Panc1 (cell line): ENCODE measurements at regions of chr2 and their contacts with region 1.

Region 1: DNA sequence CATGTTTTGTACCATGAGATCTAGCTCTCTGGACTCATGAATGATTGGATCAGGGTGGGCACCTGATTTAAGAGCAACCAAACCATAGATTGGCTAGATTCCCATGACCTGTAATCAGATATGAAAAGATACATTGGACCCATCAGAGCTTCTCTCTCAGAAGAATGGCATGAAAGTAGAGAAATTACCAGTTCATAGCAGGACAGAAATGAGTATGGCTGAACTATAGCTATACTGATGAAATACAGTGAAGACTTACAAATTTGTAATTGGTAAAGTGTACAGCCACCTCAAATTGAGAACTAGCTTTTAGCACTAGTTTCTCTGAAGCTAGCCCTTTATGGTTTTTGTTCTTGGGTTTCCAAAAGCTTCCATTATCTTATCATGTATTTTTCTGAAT is 19.0 kb upstream of the EML4 start:
- DNase-seq: no peak
- ATAC-seq: no peak
- H3K4me3 ChIP-seq: no peak overlapping the region
- H3K27ac ChIP-seq: no peak overlapping the region; the same call in 1 of the 2 replicates
- H3K4me1 ChIP-seq: peaks cover 13% of the 10 kb centered on the region
- H3K27me3 ChIP-seq: no peaks in the 10 kb centered on the region
- CTCF ChIP-seq: no peak

Region 2: DNA sequence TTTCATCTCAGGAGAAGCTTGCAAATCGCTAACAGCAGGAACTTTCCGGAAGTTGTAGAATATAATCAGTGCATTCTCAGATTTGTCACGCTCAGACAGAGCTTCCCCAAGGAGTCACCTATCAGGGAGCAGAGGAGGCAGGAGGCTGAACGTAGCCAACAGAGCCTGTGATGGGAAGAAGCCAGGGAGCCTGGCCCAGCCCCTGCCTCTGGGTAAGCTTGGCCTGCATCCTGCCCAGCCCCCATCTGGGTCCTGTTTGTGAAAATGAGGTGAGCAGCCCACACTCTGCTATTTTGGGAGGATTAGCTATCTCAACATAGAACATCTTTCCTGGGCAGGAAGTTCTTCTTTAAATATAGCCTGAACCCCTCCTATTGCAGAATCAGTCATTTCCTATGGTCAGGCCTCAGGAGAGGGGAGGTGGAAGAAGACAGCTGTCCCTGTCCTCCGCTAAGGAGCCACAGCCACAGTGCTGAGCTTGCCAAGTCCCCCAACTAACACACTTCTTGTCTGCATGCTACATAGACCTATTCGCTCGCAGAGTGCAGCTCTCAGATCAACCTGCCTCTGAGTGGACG is 121.5 kb before region 1 on chr2:
- CTCF ChIA-PET with region 1: no interaction called
- POLR2A ChIA-PET with region 1: no interaction called
- in situ Hi-C with region 1: no loop called
- intact Hi-C with region 1: no loop called
- DNase-seq: no peak
- ATAC-seq: no peak
- H3K4me3 ChIP-seq: no peak overlapping the region
- H3K27ac ChIP-seq: no peak overlapping the region
- H3K4me1 ChIP-seq: no peaks in the 10 kb centered on the region; the same call in none of the 2 replicates
- H3K27me3 ChIP-seq: no peaks in the 10 kb centered on the region
- CTCF ChIP-seq: no peak

Region 3: GRCh38 chr2:42102591-42103464 is 47.3 kb before region 1 on chr2:
- CTCF ChIA-PET with region 1: no interaction called
- POLR2A ChIA-PET with region 1: interaction called, 13 read pairs
- in situ Hi-C with region 1: no loop called
- intact Hi-C with region 1: no loop called
- DNase-seq: no peak
- ATAC-seq: no peak
- H3K4me3 ChIP-seq: no peak overlapping the region
- H3K27ac ChIP-seq: no peak overlapping the region; the same call in 1 of the 2 replicates
- H3K4me1 ChIP-seq: peaks cover 30% of the 10 kb centered on the region
- H3K27me3 ChIP-seq: no peaks in the 10 kb centered on the region
- CTCF ChIP-seq: no peak